Calu3 (cell line): ENCODE measurements at regions of chr17 and their contacts with region 1.

Region 1: GRCh38 chr17:18141210-18141803 is 32.8 kb downstream of the MYO15A start:
- DNase-seq: peak; percentile 34
- H3K4me3 Mint-ChIP-seq: no peak overlapping the region
- H3K27ac Mint-ChIP-seq: no peak overlapping the region
- H3K4me1 Mint-ChIP-seq: peaks cover 8% of the 10 kb centered on the region
- H3K27me3 Mint-ChIP-seq: peaks cover 4% of the 10 kb centered on the region
- CTCF ChIP-seq: no peak

Region 2: GRCh38 chr17:18184143-18185031 is 43.1 kb after region 1 on chr17:
- CTCF ChIA-PET with region 1: no interaction called
- intact Hi-C with region 1: loop called (anchors 5 kb)
- DNase-seq: peak; percentile 13
- H3K4me3 Mint-ChIP-seq: peak overlapping the region; percentile 88
- H3K27ac Mint-ChIP-seq: no peak overlapping the region
- H3K4me1 Mint-ChIP-seq: peaks cover 28% of the 10 kb centered on the region
- H3K27me3 Mint-ChIP-seq: no peaks in the 10 kb centered on the region
- CTCF ChIP-seq: no peak

Region 3: DNA sequence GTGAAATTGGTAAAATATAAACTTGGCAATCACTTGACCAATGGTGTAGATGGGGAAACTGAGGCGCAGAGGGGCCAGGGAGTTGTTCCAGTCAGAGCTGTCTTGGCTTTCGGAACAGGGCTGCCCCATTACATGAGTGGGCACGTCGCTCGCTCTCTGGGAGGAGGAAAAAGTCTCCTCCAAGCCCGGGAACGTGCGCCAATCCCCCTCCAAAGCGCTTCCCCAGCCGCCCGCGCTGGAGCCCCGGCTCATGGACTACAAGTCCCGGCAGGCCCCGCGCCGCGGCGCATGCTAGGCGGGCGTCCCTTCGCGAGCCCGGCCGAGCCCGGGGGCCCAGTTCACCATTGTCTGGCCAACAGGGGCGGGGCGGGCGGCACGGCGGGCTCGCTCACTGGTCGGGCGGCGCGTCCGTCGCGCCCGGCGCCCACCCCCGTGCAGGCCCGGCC is 83.8 kb after region 1 on chr17:
- CTCF ChIA-PET with region 1: no interaction called
- intact Hi-C with region 1: loop called (anchors 10 kb)
- DNase-seq: peak; percentile 94
- H3K4me3 Mint-ChIP-seq: peak overlapping the region; percentile 87
- H3K27ac Mint-ChIP-seq: no peak overlapping the region
- H3K4me1 Mint-ChIP-seq: no peaks in the 10 kb centered on the region
- H3K27me3 Mint-ChIP-seq: no peaks in the 10 kb centered on the region
- CTCF ChIP-seq: no peak